ENCODE measurements at regions of chr11 and their contacts with region 1.

Region 1: GRCh38 chr11:124961972-124962609 is 8.1 kb downstream of the CCDC15 start:
- DNase-seq: peak; percentile 86
- H3K4me3 ChIP-seq: no peak overlapping the region
- H3K27ac ChIP-seq: no peak overlapping the region
- H3K4me1 ChIP-seq: no peaks in the 10 kb centered on the region
- H3K27me3 ChIP-seq: no peaks in the 10 kb centered on the region
- CTCF ChIP-seq: peak; percentile 50 to 60
- POLR2A ChIP-seq: no peak

Region 2: GRCh38 chr11:124946735-124947141 is 15.4 kb before region 1 on chr11:
- CTCF ChIA-PET with region 1: no interaction called
- POLR2A ChIA-PET with region 1: no interaction called
- dilution Hi-C with region 1: no loop called
- intact Hi-C with region 1: no loop called
- DNase-seq: no peak
- H3K4me3 ChIP-seq: no peak overlapping the region
- H3K27ac ChIP-seq: no peak overlapping the region
- H3K4me1 ChIP-seq: no peaks in the 10 kb centered on the region
- H3K27me3 ChIP-seq: peaks cover 0 to 3% of the 10 kb centered on the region in 2 experiments
- CTCF ChIP-seq: no peak
- POLR2A ChIP-seq: no peak

Region 3: GRCh38 chr11:125111343-125112207 is 149.5 kb after region 1 on chr11 and contains the start of gene TMEM218:
- CTCF ChIA-PET with region 1: interaction called, 3 read pairs
- POLR2A ChIA-PET with region 1: no interaction called
- dilution Hi-C with region 1: no loop called
- intact Hi-C with region 1: loop called (anchors 1 kb)
- DNase-seq: peak; percentile 100
- H3K4me3 ChIP-seq: peak within 1 kb of the TSS; percentile 57 to 85 (median 72)
- H3K27ac ChIP-seq: peak within 1 kb of the TSS; percentile 10
- H3K4me1 ChIP-seq: peaks cover 6% of the 10 kb centered on the region
- H3K27me3 ChIP-seq: peaks cover 0 to 1% of the 10 kb centered on the region in 2 experiments
- CTCF ChIP-seq: no peak
- POLR2A ChIP-seq: no peak
- total RNA-seq, gene TMEM218: 17.9 and 23.8 TPM in 2 replicates

Region 4: GRCh38 chr11:125404776-125405435 is 442.8 kb after region 1 on chr11:
- CTCF ChIA-PET with region 1: interaction called, 3 read pairs
- POLR2A ChIA-PET with region 1: no interaction called
- dilution Hi-C with region 1: no loop called
- intact Hi-C with region 1: loop called (anchors 1 kb)
- DNase-seq: peak; percentile 47
- H3K4me3 ChIP-seq: no peak overlapping the region
- H3K27ac ChIP-seq: no peak overlapping the region
- H3K4me1 ChIP-seq: peaks cover 4% of the 10 kb centered on the region
- H3K27me3 ChIP-seq: peaks cover 9 to 12% of the 10 kb centered on the region in 2 experiments
- CTCF ChIP-seq: peak; percentile 79 to 99
- POLR2A ChIP-seq: no peak

Region 5: GRCh38 chr11:125592305-125593112 is 630.4 kb after region 1 on chr11 and contains the start of gene STT3A:
- CTCF ChIA-PET with region 1: no interaction called
- POLR2A ChIA-PET with region 1: no interaction called
- dilution Hi-C with region 1: no loop called
- intact Hi-C with region 1: loop called (anchors 10 kb)
- DNase-seq: peak; percentile 100
- H3K4me3 ChIP-seq: peak within 1 kb of the TSS; percentile 63 to 96 (median 79)
- H3K27ac ChIP-seq: peak within 1 kb of the TSS; percentile 79
- H3K4me1 ChIP-seq: peaks cover 17% of the 10 kb centered on the region
- H3K27me3 ChIP-seq: no peaks in the 10 kb centered on the region
- CTCF ChIP-seq: no peak
- POLR2A ChIP-seq: peak; percentile 92
- total RNA-seq, gene STT3A: 216 and 236 TPM in 2 replicates

Measured in endothelial cell of umbilical vein (primary cell).